HEK293 (cell line): ENCODE measurements at regions of chr1 and their contacts with region 1.

Region 1: DNA sequence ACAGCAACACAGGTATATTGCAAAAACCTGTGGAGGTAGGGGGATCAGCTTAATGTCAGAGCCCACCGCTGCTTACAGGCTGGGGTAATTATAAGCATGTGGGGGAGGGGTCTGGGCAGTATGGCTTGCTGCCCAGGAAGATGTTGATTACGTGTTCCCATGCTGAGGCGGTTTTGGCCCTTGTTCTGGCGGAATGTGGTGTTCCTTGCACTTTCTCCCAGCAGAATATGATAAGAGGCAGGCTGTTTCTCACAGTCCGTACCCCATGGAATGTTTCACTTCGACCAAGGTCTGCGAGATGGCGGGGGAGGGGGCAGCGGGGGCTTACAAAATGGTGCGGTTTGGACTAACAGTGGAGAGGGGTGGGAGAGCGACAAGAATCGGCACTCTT is 9.8 kb upstream of the HPCAL4 start:
- H3K4me3 ChIP-seq: no peak overlapping the region
- H3K27ac ChIP-seq: no peak overlapping the region
- H3K4me1 ChIP-seq: no peaks in the 10 kb centered on the region
- CTCF ChIP-seq: no peak

Region 2: DNA sequence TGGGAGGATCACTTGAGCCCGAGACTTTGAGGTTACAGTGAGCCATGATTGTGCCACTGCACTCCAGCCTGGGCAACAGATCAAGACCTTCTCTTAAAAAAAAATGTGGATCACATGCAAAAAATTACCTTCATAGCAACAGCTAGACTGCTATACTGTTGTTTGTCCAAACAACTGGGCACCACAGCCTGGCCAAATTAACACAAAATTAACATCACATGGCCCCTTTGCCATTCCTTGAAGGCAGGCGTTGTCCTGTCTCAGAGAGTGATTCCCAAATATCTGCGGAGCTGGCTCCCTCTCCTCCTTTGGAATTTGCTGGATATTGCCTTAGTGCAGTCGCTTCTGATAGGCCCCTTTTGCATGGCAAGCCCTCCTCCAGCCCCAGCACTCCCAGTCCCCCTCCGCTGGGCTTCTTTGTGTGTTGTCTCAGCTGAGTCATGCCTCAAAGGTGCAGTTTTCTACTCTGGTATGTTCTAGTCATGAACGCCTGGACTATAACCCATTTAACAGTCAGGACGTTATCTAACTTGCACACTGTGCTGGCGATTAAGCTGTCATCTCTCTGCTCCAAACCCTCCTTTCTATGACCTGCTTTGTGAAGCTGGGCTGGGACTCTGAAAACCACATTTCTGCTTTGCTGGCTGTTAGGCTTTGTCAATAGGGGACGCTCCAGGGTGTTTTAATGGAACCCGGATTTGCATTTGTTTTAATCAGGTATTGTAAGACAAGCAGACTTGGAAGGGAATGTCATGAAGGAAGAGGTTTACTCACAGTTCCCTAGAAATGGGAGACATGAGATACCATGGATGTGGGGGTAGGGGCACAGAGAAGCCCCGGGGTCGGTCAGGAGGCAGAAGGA is 10.3 kb after region 1 on chr1:
- CTCF ChIA-PET with region 1: interaction called, 41 read pairs
- POLR2A ChIA-PET with region 1: no interaction called
- H3K4me3 ChIP-seq: no peak overlapping the region
- H3K27ac ChIP-seq: no peak overlapping the region
- H3K4me1 ChIP-seq: no peaks in the 10 kb centered on the region
- CTCF ChIP-seq: no peak

Region 3: GRCh38 chr1:39720094-39720999 is 19.3 kb after region 1 on chr1:
- CTCF ChIA-PET with region 1: interaction called, 41 read pairs
- POLR2A ChIA-PET with region 1: no interaction called
- H3K4me3 ChIP-seq: no peak overlapping the region
- H3K27ac ChIP-seq: no peak overlapping the region
- H3K4me1 ChIP-seq: no peaks in the 10 kb centered on the region
- CTCF ChIP-seq: peak; percentile 62

Region 4: DNA sequence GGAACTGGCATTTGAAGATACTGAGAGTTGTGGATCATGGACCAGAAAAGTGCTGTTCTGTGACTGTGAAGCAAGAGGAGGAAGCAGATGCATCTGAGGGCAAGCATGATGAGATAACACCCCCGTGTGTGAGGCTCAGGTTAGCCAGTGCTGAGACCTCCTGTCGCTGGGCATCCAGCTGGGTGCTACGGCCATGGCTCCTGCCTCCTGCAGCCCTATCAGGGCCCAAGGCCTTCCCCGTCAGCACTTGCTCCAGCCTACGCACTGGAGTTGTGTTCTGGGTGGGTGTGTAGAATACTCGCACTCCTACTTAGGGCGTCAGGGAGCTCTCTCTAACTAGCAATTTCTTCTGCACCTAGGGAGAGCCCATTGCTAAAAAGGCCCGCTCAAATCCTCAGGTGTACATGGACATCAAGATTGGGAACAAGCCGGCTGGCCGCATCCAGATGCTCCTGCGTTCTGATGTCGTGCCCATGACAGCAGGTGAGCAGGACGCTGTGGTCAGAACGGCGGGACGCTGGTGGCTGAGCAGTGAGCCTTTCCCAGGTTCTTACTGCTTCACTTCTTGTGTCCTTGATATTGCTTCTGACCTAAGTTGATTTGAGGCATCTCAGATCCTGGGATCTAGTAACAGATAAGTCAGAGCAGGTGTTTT is 44.1 kb after region 1 on chr1:
- CTCF ChIA-PET with region 1: no interaction called
- POLR2A ChIA-PET with region 1: no interaction called
- H3K4me3 ChIP-seq: no peak overlapping the region
- H3K27ac ChIP-seq: no peak overlapping the region
- H3K4me1 ChIP-seq: no peaks in the 10 kb centered on the region
- CTCF ChIP-seq: no peak

Region 5: GRCh38 chr1:39799770-39800470 is 98.9 kb after region 1 on chr1:
- CTCF ChIA-PET with region 1: interaction called, 35 read pairs
- POLR2A ChIA-PET with region 1: no interaction called
- H3K4me3 ChIP-seq: no peak overlapping the region
- H3K27ac ChIP-seq: no peak overlapping the region
- H3K4me1 ChIP-seq: no peaks in the 10 kb centered on the region
- CTCF ChIP-seq: peak; percentile 73